Activated CD8-positive, alpha-beta T cell treated with anti-CD3 and anti-CD28 coated beads for 36 hours (primary cell): ENCODE measurements at regions of chr7 and their contacts with region 1.

Region 1: GRCh38 chr7:106041140-106041717 is 70.9 kb downstream of the SYPL1 start:
- DNase-seq: peak; percentile 50
- ATAC-seq: peak; percentile 59
- H3K4me3 Mint-ChIP-seq: no peak overlapping the region
- H3K27ac Mint-ChIP-seq: no peak overlapping the region
- H3K4me1 Mint-ChIP-seq: peaks cover 28% of the 10 kb centered on the region
- H3K27me3 Mint-ChIP-seq: no peaks in the 10 kb centered on the region
- CTCF ChIP-seq: peak; percentile 82

Region 2: DNA sequence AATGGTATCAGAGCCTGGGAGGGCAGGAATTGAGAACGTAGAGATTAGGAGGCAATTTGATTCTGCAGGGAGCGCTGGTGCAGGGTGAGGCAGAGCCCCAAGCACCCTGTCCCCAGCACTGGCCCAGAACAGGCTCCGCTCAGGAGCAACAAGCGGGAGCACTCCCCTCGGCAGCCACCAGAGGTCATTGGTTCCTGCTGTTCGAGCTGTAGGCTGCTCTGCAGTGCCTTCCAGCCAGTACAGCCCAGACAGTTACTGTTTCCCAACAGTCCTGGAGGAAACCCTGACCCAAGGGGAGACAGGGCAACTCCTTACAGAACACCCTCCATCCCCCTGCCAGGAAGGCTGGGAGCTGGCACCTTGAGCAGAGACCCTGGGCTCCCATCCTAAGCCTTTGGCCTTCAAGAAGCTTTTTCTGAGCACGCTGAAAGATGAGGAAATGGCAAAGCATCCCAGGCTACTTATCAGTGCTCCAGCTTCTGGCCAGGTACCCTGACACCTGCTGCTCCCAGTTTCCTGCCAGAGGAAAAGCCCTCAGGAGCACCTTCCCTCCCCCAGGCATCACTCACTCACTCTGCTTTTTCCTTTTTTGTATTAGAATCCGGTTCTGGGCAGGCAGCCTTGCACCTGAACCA is 388.8 kb before region 1 on chr7:
- CTCF ChIA-PET with region 1: interaction called, 97 read pairs
- POLR2A ChIA-PET with region 1: interaction called, 3 read pairs
- intact Hi-C with region 1: loop called (anchors 2 kb)
- DNase-seq: peak; percentile 81
- ATAC-seq: peak; percentile 95
- H3K4me3 Mint-ChIP-seq: no peak overlapping the region
- H3K27ac Mint-ChIP-seq: no peak overlapping the region
- H3K4me1 Mint-ChIP-seq: peaks cover 5% of the 10 kb centered on the region
- H3K27me3 Mint-ChIP-seq: no peaks in the 10 kb centered on the region
- CTCF ChIP-seq: peak; percentile 85

Region 3: DNA sequence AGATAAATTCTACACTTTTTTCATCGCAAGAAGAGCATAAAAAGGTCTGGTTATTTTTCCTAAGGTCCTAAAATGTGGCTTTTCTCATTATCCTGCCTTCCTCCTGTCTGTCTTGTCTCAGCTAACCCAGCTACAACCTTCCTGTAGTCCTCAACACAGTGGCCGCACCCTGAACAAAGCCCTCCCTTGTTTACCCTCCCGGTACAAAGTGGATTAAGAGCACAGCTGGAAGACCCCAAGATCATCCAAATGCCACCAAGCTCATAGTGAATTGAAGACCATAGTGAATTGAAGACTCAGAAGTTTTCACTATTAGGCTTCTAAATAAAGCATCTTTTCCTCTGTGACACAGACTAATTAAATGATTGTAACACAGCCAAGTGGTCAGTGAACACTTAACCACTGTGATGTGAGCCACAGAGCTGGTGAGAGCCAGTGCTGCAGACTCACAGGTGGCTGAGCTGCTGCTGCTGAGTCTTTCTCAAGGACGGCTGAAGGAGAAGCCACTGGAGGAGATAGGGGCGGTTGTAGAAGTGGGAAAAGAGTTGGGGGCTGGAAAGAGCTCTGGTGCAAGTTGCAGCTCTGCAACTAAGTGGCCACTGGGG is 288.5 kb before region 1 on chr7:
- CTCF ChIA-PET with region 1: interaction called, 14 read pairs
- POLR2A ChIA-PET with region 1: no interaction called
- intact Hi-C with region 1: no loop called
- DNase-seq: no peak
- ATAC-seq: no peak
- H3K4me3 Mint-ChIP-seq: no peak overlapping the region
- H3K27ac Mint-ChIP-seq: no peak overlapping the region
- H3K4me1 Mint-ChIP-seq: no peaks in the 10 kb centered on the region
- H3K27me3 Mint-ChIP-seq: no peaks in the 10 kb centered on the region
- CTCF ChIP-seq: no peak

Region 4: GRCh38 chr7:105876091-105876963 is 164.9 kb before region 1 on chr7 and contains the start of gene ATXN7L1:
- CTCF ChIA-PET with region 1: interaction called, 21 read pairs
- POLR2A ChIA-PET with region 1: interaction called, 3 read pairs
- intact Hi-C with region 1: no loop called
- DNase-seq: peak; percentile 91
- ATAC-seq: peak; percentile 91
- H3K4me3 Mint-ChIP-seq: peak within 1 kb of the TSS; percentile 87
- H3K27ac Mint-ChIP-seq: peak within 1 kb of the TSS; percentile 85
- H3K4me1 Mint-ChIP-seq: peaks cover 56% of the 10 kb centered on the region
- H3K27me3 Mint-ChIP-seq: peaks cover 1% of the 10 kb centered on the region
- CTCF ChIP-seq: peak; percentile 58
- total RNA-seq, gene ATXN7L1: 4.8 to 5.3 TPM

Region 5: DNA sequence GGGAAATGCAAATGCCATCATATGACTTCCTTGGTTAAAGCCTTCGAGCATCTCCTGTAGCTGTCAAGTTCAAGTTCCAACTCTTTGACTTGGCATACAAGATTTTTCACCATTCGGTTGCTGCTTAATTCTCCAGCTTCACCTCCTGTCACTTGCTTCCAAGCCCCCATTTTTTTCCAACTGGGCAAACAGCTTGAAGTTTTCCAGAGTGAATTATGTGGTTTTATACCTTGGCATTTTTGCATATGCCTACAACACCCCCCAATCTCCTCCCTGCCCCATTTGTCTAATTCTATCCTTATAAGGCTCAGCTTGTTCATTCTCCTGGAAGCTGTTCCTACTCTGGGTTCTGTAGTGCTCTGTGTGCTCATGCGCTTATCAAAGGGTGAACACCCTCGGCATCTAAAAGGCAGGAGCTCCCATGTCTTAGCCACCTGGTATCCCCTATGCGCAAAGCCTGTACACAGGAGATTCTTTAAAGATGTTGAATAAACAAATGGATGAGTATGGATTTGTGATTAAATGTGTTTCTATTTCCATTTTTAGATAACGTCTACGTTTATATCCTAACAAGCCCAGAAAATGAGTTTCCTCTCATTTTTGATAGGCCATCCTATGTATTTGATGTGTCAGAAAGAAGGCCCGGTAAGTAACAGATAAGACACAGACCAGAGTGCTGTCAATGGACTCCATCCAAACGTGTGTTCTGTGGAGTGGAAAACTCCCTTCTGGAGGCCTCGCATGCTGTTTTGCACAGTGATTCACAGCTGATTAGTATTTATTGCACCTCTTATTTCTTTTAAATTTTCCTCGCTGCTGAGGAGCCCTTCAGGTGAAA is 25.6 kb before region 1 on chr7:
- CTCF ChIA-PET with region 1: interaction called, 104 read pairs
- POLR2A ChIA-PET with region 1: interaction called, 3 read pairs
- intact Hi-C with region 1: no loop called
- DNase-seq: no peak
- ATAC-seq: no peak
- H3K4me3 Mint-ChIP-seq: no peak overlapping the region
- H3K27ac Mint-ChIP-seq: no peak overlapping the region
- H3K4me1 Mint-ChIP-seq: peaks cover 44% of the 10 kb centered on the region
- H3K27me3 Mint-ChIP-seq: peaks cover 2% of the 10 kb centered on the region
- CTCF ChIP-seq: no peak

Region 6: DNA sequence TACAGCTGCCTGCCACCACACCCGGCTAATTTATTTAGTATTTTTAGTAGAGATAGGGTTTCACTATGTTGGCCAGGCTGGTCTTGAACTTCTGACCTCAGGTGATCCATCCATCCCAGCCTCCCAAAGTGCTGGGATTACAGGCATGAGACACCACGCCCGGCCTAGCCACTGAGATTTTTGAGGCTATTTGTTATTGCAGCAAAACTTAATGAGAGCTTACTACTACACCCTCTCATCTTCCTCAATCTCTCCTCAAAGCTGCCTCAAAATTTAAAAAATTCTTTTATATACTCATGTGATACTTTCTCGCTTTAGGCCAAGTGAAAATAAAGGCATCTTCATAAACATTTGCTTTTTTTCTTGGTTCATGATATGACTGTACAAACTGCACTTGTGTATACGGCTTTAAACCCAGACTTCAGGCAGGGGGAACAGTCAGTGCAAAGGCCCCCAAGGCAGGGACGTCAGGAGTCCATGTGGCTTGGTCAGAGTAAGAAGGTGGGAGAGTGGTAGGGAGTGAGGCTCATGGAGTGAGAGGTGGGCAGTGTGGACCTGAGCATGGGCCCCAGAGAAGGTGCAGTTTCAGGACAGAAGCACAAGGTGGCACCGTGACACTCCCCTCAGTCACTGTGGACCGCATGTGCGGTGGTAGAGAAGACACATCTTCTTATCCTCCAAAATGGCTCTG is 15.4 kb after region 1 on chr7:
- CTCF ChIA-PET with region 1: interaction called, 18 read pairs
- POLR2A ChIA-PET with region 1: no interaction called
- intact Hi-C with region 1: no loop called
- DNase-seq: peak; percentile 83
- ATAC-seq: peak; percentile 97
- H3K4me3 Mint-ChIP-seq: no peak overlapping the region
- H3K27ac Mint-ChIP-seq: peak overlapping the region; percentile 34
- H3K4me1 Mint-ChIP-seq: peaks cover 25% of the 10 kb centered on the region
- H3K27me3 Mint-ChIP-seq: no peaks in the 10 kb centered on the region
- CTCF ChIP-seq: peak; percentile 87

Region 7: DNA sequence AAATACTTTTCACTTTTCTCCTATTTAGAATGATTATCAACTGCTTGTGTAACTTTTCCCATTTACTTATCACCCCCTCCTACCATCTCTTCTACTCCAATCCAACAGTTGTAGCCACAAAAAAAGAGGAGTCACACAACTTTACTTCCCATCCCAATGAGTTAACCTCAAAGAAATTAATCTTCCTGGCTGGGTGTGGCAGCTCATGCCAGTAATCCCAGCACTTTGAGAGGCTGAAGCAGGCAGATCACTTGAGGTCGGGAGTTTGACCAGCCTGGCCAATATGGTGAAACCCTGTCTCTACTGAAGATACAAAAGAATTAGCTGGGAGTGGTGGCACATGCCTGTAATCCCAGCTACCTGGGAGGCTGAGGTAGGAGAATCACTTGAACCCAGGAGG is 51.0 kb after region 1 on chr7:
- CTCF ChIA-PET with region 1: no interaction called
- POLR2A ChIA-PET with region 1: no interaction called
- intact Hi-C with region 1: no loop called
- DNase-seq: no peak
- ATAC-seq: no peak
- H3K4me3 Mint-ChIP-seq: no peak overlapping the region
- H3K27ac Mint-ChIP-seq: peak overlapping the region; percentile 55
- H3K4me1 Mint-ChIP-seq: peaks cover 4% of the 10 kb centered on the region
- H3K27me3 Mint-ChIP-seq: no peaks in the 10 kb centered on the region
- CTCF ChIP-seq: no peak